Activated naive CD4-positive, alpha-beta T cell treated with anti-CD3 and anti-CD28 coated beads for 36 hours (primary cell): ENCODE measurements at regions of chr7 and their contacts with region 1.

Region 1: GRCh38 chr7:149125863-149126661 is at the start of gene ZNF425:
- DNase-seq: peak; percentile 91
- H3K4me3 Mint-ChIP-seq: peak within 1 kb of the TSS; percentile 98
- H3K27ac Mint-ChIP-seq: peak within 1 kb of the TSS; percentile 99
- H3K4me1 Mint-ChIP-seq: peaks cover 22% of the 10 kb centered on the region
- H3K27me3 Mint-ChIP-seq: no peaks in the 10 kb centered on the region
- total RNA-seq, gene ZNF425: 0.57 TPM

Region 2: GRCh38 chr7:148884299-148885022 is 241.6 kb before region 1 on chr7:
- CTCF ChIA-PET with region 1: no interaction called
- intact Hi-C with region 1: loop called (anchors 1 kb)
- DNase-seq: peak; percentile 93
- H3K4me3 Mint-ChIP-seq: peak overlapping the region; percentile 94
- H3K27ac Mint-ChIP-seq: peak overlapping the region; percentile 99
- H3K4me1 Mint-ChIP-seq: peaks cover 37% of the 10 kb centered on the region
- H3K27me3 Mint-ChIP-seq: no peaks in the 10 kb centered on the region

Region 3: GRCh38 chr7:149028346-149029109 is 97.5 kb before region 1 on chr7 and contains the start of gene PDIA4:
- CTCF ChIA-PET with region 1: interaction called, 6 read pairs
- intact Hi-C with region 1: loop called (anchors 1 kb)
- DNase-seq: peak; percentile 100
- H3K4me3 Mint-ChIP-seq: peak within 1 kb of the TSS; percentile 95
- H3K27ac Mint-ChIP-seq: peak within 1 kb of the TSS; percentile 89
- H3K4me1 Mint-ChIP-seq: peaks cover 37% of the 10 kb centered on the region
- H3K27me3 Mint-ChIP-seq: no peaks in the 10 kb centered on the region
- total RNA-seq, gene PDIA4: 80.2 to 82.8 TPM

Region 4: DNA sequence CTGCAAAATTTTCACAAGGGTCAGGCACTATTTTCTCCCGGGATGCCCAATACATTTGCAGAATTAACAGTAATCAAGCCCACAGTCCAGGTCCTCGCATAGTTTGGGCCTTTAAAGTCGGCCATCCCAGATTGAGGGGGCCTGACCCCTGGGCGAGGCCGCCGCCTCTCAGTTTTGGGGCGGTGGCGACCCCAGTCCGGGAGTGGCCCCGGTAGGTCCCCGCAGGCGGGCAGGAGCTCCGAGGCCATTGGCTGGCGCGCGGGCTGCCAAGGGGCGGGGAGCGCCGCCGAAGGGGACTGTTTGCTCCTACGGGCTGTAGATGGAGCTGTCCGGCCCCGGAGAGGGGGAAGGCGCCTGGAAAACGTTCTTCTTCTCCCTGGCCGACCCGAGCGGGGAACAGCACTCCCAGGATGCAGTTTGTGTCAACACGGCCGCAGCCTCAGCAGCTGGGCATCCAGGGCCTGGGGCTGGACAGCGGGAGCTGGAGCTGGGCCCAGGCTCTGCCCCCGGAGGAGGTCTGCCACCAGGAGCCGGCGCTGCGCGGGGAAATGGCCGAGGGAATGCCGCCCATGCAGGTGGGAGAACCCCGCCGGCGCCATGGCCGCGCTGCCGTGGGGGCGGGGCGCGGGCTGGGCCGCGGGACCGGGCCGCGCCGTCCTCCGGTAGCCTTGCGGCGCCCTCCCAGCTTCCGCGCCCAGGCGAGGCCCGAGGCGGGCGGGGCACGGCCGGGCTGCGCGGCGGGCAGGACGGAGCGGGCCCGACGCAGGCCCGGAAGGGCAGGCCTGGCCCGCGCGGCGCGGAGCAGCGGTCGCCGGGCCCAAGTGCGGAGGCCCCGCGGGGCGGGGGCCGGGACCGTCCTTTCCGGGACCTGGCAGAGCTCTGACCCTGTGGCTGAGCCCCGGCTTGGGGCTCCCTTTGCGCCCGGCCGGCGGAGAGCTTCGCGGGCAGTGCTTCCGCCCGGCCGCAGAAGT is 69.4 kb after region 1 on chr7 and contains the start of gene ZNF282:
- CTCF ChIA-PET with region 1: interaction called, 7 read pairs
- intact Hi-C with region 1: loop called (anchors 1 kb)
- DNase-seq: peak; percentile 85
- H3K4me3 Mint-ChIP-seq: peak within 1 kb of the TSS; percentile 85
- H3K27ac Mint-ChIP-seq: peak within 1 kb of the TSS; percentile 78
- H3K4me1 Mint-ChIP-seq: peaks cover 30% of the 10 kb centered on the region
- H3K27me3 Mint-ChIP-seq: no peaks in the 10 kb centered on the region
- total RNA-seq, gene ZNF282: 21.6 to 22.0 TPM

Region 5: DNA sequence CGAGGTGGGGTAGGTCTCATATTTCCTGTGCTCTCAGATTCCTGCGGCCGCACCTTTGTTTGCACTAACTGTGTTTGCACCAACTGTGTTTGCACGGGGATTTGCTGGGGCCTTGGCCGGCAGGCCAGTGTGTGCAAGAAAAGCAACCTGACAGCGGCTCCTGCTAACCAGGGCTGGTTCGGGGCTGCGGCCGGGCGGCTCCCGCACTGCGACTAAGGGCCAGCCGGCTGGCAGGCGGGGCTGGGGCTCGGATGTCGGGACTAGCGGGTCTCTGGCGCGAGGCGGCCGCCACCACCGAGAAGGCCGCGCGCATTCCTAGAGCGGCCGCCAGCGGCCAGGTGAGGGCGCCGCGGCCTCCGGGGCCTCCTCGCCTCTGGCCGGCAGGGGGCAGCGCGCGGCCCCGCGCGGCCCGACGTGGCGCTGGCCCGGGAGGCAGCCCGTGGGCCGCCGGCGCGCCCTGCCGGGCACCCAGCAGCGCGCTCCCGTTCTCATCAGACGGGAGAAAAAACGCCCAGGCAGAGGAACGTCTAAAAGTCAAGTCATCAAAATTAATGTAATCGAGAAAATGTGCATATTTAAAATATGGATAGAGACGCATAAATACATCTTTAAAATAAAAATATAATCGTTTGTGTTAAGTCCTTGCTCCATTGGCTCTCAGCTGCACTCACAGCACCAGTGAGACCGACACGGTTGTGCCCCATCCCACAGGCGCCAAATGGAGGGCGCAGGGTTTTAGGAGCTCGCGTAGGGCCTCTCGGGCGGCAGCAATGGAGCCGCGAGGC is 296.3 kb after region 1 on chr7:
- CTCF ChIA-PET with region 1: no interaction called
- intact Hi-C with region 1: loop called (anchors 2 kb)
- DNase-seq: peak; percentile 66
- H3K4me3 Mint-ChIP-seq: peak overlapping the region; percentile 67
- H3K27ac Mint-ChIP-seq: peak overlapping the region; percentile 65
- H3K4me1 Mint-ChIP-seq: peaks cover 7% of the 10 kb centered on the region
- H3K27me3 Mint-ChIP-seq: peaks cover 2% of the 10 kb centered on the region

Region 6: DNA sequence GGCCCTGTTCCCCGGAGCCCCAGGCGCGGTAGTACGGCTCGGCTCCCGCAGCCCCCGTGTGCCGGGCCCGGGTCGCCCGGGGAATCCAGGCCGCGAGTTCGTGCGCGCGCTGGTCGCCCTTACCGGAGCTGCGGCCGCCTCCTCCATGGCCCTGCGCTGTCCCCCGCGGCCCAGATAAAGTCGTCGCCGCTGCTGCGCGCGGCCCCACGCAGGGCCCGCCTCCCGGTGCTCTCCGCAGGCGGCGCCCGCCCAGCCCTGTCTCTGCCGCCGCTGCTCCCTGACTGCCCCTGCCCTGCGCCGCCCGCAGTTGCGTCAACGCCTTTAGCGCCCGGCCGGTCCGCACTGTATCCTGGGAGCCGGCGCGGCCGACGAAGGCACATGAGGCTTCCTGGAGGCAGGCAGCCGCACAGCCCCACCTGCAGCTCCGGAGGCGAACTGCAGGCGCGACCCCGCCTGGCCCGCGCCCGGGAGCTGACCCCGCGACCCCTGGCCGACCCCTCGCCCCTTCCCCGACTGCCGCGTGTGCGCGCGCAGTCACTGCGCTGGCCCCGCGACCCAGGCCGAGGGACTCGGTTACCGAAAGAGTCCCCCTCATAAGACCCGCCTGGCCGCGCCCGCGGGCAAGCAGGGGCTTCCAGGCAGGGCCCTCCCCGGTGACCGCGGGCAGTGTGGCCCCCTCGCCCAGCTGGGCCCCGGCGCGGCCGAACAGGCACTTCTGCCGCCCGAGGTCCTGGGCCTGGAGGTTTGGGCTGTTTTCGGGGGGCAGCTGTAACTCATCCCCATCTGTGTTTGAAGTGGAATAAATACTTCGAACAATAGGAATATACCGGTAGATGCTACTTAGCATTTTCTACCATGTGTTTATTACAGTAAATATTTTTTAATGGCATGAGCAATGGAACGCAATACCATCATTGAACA is 498.6 kb after region 1 on chr7:
- CTCF ChIA-PET with region 1: interaction called, 3 read pairs
- intact Hi-C with region 1: loop called (anchors 1 kb)
- DNase-seq: peak; percentile 93
- H3K4me3 Mint-ChIP-seq: peak overlapping the region; percentile 87
- H3K27ac Mint-ChIP-seq: peak overlapping the region; percentile 80
- H3K4me1 Mint-ChIP-seq: peaks cover 33% of the 10 kb centered on the region
- H3K27me3 Mint-ChIP-seq: no peaks in the 10 kb centered on the region